GM12878 (cell line): ENCODE measurements at regions of chr9 and their contacts with region 1.

Region 1: GRCh38 chr9:130235897-130236668 is 29.5 kb upstream of the HMCN2 start:
- DNase-seq: no peak
- ATAC-seq: peak; percentile 25
- H3K4me3 ChIP-seq: no peak overlapping the region
- H3K27ac ChIP-seq: no peak overlapping the region
- H3K4me1 ChIP-seq: peaks cover 15% of the 10 kb centered on the region
- H3K27me3 ChIP-seq: no peaks in the 10 kb centered on the region
- CTCF ChIP-seq: peak; percentile 92 to 99 (median 92)
- EP300 ChIP-seq: no peak
- POLR2A ChIP-seq: no peak
- RAD21 ChIP-seq: peak; percentile 81

Region 2: DNA sequence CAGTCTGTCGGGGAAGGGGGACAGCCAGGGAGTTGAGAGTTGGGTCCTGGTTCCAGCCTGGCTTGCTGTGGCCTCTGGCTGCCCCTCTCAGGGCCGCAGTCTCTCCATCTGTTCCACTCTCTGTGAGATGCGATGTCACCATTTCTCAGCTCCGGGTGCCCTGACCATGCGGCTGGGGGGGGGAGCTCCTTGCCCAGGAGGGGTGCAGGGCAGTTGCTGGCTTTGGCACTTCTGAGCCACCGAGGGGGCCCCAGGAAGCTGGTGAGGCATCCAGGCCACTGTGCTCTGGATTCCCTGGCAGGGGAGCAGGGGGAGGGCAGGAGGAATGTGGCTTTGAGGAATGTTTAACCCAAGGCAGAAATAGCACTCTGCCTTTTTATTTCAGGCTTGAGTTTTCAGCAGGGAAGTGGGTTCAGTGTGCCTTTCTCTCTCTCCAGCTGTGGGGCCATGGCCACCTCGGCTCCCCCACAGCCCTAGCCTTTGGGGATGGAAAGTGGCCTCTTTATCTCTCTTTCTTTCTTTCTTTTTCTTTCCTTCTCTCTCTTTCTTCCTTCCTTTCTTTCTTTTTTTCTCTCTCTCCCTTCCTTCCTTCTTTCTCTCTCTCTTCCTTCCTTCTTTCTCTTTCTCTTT is 52.8 kb before region 1 on chr9:
- CTCF ChIA-PET with region 1: no interaction called
- POLR2A ChIA-PET with region 1: no interaction called
- RAD21 ChIA-PET with region 1: no interaction called
- SMC1A ChIA-PET with region 1: no interaction called
- in situ Hi-C with region 1: no loop called
- intact Hi-C with region 1: no loop called
- DNase-seq: no peak
- ATAC-seq: no peak
- H3K4me3 ChIP-seq: no peak overlapping the region
- H3K27ac ChIP-seq: no peak overlapping the region
- H3K4me1 ChIP-seq: no peaks in the 10 kb centered on the region
- H3K27me3 ChIP-seq: no peaks in the 10 kb centered on the region
- CTCF ChIP-seq: no peak
- EP300 ChIP-seq: no peak
- POLR2A ChIP-seq: no peak
- RAD21 ChIP-seq: no peak

Region 3: DNA sequence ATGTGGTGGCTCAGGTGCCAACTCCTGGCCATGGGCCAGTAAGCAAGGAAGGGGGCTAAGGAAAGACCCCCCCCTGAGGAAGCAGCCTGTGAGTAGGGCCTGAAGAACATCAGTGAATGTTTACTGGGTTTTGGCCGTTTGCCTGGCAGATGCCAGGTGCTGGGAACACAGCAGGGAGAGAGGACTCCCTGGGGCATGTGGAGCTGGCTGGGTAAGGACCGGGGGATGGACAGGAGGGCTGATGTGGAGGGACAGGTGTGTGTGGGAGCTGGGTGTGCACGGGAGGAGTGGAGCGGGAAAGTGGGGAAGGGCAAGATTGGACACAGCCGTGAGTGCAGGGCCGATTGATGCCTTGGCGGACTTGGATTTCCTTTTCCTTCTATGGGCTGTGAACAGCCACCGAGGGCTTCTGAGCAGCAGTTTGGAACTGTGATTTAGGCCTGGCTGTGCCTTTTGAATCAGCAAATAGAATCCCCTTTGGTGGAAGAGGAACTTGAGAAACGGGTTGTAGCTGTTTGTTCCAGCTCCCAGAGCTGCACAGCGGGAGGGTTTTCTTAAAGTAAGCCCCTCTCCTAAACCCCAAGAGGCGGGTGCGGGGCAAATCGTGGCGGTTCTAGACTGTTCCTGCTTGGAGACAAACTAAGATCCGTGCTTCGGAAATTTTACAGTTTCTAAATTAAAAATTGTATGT is 32.6 kb after region 1 on chr9:
- CTCF ChIA-PET with region 1: no interaction called
- POLR2A ChIA-PET with region 1: no interaction called
- RAD21 ChIA-PET with region 1: no interaction called
- SMC1A ChIA-PET with region 1: no interaction called
- in situ Hi-C with region 1: no loop called
- intact Hi-C with region 1: no loop called
- DNase-seq: no peak
- ATAC-seq: no peak
- H3K4me3 ChIP-seq: no peak overlapping the region
- H3K27ac ChIP-seq: no peak overlapping the region
- H3K4me1 ChIP-seq: no peaks in the 10 kb centered on the region
- H3K27me3 ChIP-seq: peaks cover 9 to 10% of the 10 kb centered on the region in 2 experiments
- CTCF ChIP-seq: no peak
- EP300 ChIP-seq: no peak
- POLR2A ChIP-seq: no peak
- RAD21 ChIP-seq: no peak

Region 4: GRCh38 chr9:130343445-130343918 is 107.4 kb after region 1 on chr9:
- CTCF ChIA-PET with region 1: interaction called, 3 read pairs
- POLR2A ChIA-PET with region 1: no interaction called
- RAD21 ChIA-PET with region 1: no interaction called
- SMC1A ChIA-PET with region 1: no interaction called
- in situ Hi-C with region 1: no loop called
- intact Hi-C with region 1: loop called (anchors 5 kb)
- DNase-seq: no peak
- ATAC-seq: peak; percentile 44; the same call in 2 of the 3 replicates
- H3K4me3 ChIP-seq: no peak overlapping the region
- H3K27ac ChIP-seq: no peak overlapping the region
- H3K4me1 ChIP-seq: no peaks in the 10 kb centered on the region
- H3K27me3 ChIP-seq: no peaks in the 10 kb centered on the region
- CTCF ChIP-seq: peak; percentile 57 to 78 (median 61)
- EP300 ChIP-seq: no peak
- POLR2A ChIP-seq: no peak
- RAD21 ChIP-seq: peak; percentile 64